PC-3 (cell line): ENCODE measurements at regions of chr7 and their contacts with region 1.

Region 1: GRCh38 chr7:6461946-6462550 is 14.3 kb upstream of the DAGLB start:
- DNase-seq: no peak
- ATAC-seq: no peak
- H3K4me3 ChIP-seq: no peak overlapping the region
- H3K27ac ChIP-seq: no peak overlapping the region
- H3K4me1 ChIP-seq: no peaks in the 10 kb centered on the region
- H3K27me3 ChIP-seq: no peaks in the 10 kb centered on the region
- CTCF ChIP-seq: no peak

Region 2: GRCh38 chr7:6350433-6351058 is 111.5 kb before region 1 on chr7:
- CTCF ChIA-PET with region 1: interaction called, 3 read pairs
- POLR2A ChIA-PET with region 1: interaction called, 10 read pairs
- intact Hi-C with region 1: no loop called
- DNase-seq: no peak
- ATAC-seq: no peak
- H3K4me3 ChIP-seq: no peak overlapping the region
- H3K27ac ChIP-seq: no peak overlapping the region
- H3K4me1 ChIP-seq: no peaks in the 10 kb centered on the region
- H3K27me3 ChIP-seq: no peaks in the 10 kb centered on the region
- CTCF ChIP-seq: no peak